CD14-positive monocyte (primary cell): ENCODE measurements at regions of chr3 and their contacts with region 1.

Region 1: DNA sequence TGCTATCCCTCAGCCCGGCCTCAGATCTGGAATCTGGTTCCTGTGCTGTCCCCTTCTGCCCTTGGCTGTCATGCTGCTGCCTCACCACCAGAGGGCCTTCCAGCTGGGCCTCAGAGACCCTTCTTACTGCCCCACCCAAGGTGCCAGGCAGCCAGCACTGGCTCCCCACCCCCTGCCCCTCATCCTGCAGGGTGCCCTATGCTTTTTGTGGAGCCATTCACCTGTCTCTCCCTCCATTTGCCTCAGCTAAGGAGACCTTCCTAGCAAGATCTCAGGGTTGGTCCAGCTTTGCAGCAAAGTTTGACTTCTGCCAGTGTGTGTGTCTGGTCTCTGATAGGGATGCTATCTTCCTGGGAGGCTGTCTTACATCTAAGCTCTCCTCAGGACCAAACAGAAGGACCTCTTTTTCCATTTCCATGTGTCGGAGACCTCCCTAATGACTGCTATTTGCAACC is 1.9 kb upstream of the VWA5B2 start:
- DNase-seq: peak; percentile 19 to 52 (median 19)
- H3K4me3 ChIP-seq: no peak overlapping the region
- H3K4me3 Mint-ChIP-seq: peak overlapping the region in 1 of 2 donors; percentile 46
- H3K27ac ChIP-seq: no peak overlapping the region
- H3K27ac Mint-ChIP-seq: no peak overlapping the region
- H3K4me1 ChIP-seq: peaks cover 4 to 8% of the 10 kb centered on the region in 2 donors
- H3K4me1 Mint-ChIP-seq: peaks cover 8% of the 10 kb centered on the region
- H3K27me3 ChIP-seq: peaks cover 47 to 59% of the 10 kb centered on the region in 2 donors
- H3K27me3 Mint-ChIP-seq: peaks cover 61 to 84% (median 62%) of the 10 kb centered on the region in 3 donors
- CTCF ChIP-seq: peak; percentile 98

Region 2: DNA sequence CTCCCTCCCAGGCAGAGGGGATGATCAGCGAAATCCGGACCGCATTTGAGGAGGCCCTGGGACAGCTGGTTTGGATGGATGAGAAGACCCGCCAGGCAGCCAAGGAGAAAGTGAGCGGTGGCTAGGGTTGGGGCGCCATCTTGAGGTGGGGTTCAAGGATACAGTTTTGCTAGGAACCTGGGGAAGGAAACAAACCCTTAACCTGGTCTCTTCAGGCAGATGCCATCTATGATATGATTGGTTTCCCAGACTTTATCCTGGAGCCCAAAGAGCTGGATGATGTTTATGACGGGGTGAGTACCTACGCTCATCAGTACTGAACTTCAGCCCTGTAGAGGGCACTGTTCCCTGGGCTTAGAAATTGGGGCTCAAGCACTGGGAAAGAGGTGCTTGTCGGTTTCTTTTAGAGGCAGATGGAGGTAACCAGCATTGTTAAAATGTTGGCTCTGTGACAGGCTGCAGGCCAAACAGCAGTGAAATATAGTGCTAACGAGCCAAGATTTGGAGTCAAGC is 62.0 kb after region 1 on chr3:
- intact Hi-C with region 1: loop called in 1 of 2 experiments (anchors 2 kb)
- DNase-seq: peak; percentile 19 to 44 (median 33)
- H3K4me3 ChIP-seq: no peak overlapping the region
- H3K4me3 Mint-ChIP-seq: peak overlapping the region in 1 of 2 donors; percentile 21
- H3K27ac ChIP-seq: no peak overlapping the region
- H3K27ac Mint-ChIP-seq: no peak overlapping the region
- H3K4me1 ChIP-seq: peaks cover 5 to 7% of the 10 kb centered on the region in 2 donors
- H3K4me1 Mint-ChIP-seq: peaks cover 10% of the 10 kb centered on the region
- H3K27me3 ChIP-seq: peaks cover 0 to 3% of the 10 kb centered on the region in 2 donors
- H3K27me3 Mint-ChIP-seq: peaks cover 6 to 31% (median 30%) of the 10 kb centered on the region in 3 donors
- CTCF ChIP-seq: peak; percentile 82